BJ (cell line): ENCODE measurements at regions of chr5 and their contacts with region 1.

Region 1: DNA sequence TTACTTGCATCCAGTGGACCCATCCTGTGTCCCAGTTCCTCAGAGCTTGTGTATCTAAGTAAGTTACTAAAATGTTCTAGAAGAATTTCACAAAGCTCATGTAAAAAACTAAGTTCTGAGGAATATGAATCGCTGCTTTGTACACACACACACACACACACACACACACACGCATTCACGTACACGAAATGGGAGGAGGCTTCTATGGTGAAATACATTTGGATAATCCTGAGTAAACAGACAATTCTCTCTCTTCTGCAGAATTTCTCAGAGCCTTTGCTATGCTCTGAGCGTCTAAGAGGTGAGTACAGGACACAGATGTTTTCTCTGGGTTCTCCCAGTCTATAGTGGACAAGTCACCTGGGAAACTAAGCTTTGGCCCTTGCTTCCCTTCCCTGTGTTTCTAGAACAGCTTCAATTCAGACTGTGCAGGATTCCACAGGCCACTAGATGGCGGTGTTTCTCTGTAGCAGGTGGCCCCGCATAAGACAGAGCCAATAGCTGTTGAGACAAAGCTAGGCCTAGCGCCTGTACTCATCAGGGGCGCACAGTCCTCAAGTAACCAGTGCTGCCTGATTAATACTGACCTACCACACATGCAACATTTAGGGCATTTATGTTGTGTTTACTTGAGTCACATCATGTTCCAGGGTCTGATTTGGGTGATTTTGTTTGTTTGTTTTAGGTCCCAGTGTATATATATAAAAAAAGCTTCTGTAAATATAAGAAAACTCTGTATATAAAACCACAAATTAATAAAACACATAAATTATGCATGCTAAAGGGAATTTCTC is 114.8 kb downstream of the LIFR start:
- DNase-seq: no peak
- H3K4me3 ChIP-seq: no peak overlapping the region
- H3K27me3 ChIP-seq: no peaks in the 10 kb centered on the region; the same call in none of the 2 replicates
- CTCF ChIP-seq: peak; percentile 96

Region 2: GRCh38 chr5:38347040-38347763 is 94.4 kb before region 1 on chr5:
- CTCF ChIA-PET with region 1: no interaction called
- POLR2A ChIA-PET with region 1: no interaction called
- DNase-seq: no peak
- H3K4me3 ChIP-seq: no peak overlapping the region
- H3K27me3 ChIP-seq: no peaks in the 10 kb centered on the region
- CTCF ChIP-seq: no peak

Region 3: DNA sequence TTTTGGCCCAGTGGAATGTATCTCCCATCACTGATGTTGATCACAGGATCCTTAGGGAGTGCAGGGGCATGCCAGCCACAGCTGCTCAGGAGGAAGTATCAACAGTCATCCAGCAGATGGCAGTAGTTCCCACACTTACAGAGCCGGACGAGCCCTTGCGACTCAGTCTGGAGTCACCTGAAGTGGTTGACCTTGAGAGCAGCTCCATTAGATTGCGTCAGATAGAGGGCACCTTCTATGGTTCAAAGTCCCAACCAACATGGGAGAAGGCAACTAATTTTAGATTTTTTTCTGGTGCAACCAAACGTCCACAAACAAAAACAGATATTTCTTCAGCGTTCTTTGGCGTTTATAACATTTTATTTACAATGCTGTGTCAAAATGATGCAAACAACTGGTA is 58.8 kb before region 1 on chr5:
- CTCF ChIA-PET with region 1: interaction called, 11 read pairs
- POLR2A ChIA-PET with region 1: no interaction called
- DNase-seq: no peak
- H3K4me3 ChIP-seq: no peak overlapping the region
- H3K27me3 ChIP-seq: peaks cover 11% of the 10 kb centered on the region
- CTCF ChIP-seq: peak; percentile 89

Region 4: DNA sequence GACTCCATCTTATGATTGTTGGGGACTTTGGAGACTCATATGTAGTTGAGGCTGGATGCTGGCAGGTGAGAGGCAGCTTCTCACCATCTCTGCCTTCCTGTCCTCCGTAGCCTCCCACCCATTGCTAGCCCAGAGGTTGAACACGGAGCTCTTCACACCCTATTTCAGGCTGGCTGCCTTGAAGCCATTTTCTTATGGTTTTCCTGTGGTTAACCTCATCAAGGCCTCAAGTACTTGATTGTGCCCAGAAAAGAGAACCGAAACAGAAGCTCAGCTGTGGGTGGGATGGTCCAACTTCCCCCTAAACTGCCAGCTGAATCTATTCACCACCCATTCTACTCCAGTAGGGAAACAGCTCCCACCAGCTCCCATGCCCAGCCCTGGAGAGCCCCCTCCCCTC is 11.9 kb after region 1 on chr5:
- CTCF ChIA-PET with region 1: interaction called, 23 read pairs
- POLR2A ChIA-PET with region 1: no interaction called
- DNase-seq: no peak
- H3K4me3 ChIP-seq: no peak overlapping the region
- H3K27me3 ChIP-seq: no peaks in the 10 kb centered on the region; the same call in 1 of the 2 replicates
- CTCF ChIP-seq: no peak

Region 5: GRCh38 chr5:38515646-38516045 is 74.0 kb after region 1 on chr5:
- CTCF ChIA-PET with region 1: interaction called, 11 read pairs
- POLR2A ChIA-PET with region 1: no interaction called
- DNase-seq: no peak
- H3K4me3 ChIP-seq: no peak overlapping the region
- H3K27me3 ChIP-seq: no peaks in the 10 kb centered on the region
- CTCF ChIP-seq: peak; percentile 65

Region 6: DNA sequence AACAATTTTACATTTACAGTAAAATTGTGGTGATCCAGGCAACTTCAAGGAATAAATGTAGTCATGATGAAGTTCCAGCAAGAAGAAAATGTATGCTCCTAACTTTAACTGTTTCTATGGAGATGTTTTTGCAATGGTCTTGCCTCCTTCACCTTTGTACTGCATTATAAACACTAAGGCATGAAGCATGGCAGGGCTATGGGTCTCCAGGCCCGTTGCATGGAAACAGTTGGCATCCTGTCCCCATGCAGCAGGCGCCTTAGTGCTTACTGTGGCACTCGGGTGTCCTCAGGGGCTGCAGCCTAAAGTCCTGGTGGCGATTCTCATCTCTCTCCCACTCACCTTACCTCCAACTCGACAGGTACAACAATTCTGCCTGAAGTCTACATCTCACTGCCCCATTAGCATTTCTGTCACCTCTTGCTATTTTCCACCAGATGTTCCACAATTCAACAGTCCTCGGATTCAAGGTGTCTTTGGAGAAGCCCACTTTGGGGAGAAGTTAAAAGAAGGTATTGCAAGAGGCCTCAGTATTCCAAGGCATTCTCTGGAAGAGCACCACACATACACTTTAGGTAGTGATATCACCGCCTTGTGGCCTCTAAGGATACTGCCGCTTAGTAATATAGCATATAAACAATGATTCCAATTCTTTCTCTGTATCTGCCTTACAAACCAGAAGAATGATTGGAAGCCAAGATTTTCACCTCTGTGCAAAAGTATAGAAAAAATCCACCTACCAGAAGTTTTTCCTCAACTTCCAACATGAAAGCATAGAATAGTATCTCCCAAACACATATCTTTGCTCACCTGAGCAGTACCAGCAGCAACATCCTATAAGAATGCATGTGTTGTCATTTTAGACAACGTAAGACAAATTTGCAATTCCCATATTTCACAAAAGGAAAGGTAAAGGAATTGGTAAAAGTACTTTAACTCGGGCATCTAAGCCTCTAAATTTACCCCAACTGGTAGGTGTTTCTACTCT is 109.7 kb after region 1 on chr5:
- CTCF ChIA-PET with region 1: interaction called, 36 read pairs
- POLR2A ChIA-PET with region 1: no interaction called
- DNase-seq: no peak
- H3K4me3 ChIP-seq: no peak overlapping the region
- H3K27me3 ChIP-seq: no peaks in the 10 kb centered on the region
- CTCF ChIP-seq: peak; percentile 67

Region 7: GRCh38 chr5:38780950-38781349 is 339.3 kb after region 1 on chr5:
- CTCF ChIA-PET with region 1: interaction called, 20 read pairs
- POLR2A ChIA-PET with region 1: no interaction called
- DNase-seq: no peak
- H3K4me3 ChIP-seq: no peak overlapping the region
- H3K27me3 ChIP-seq: no peaks in the 10 kb centered on the region; the same call in 1 of the 2 replicates
- CTCF ChIP-seq: peak; percentile 39

Region 8: GRCh38 chr5:38816083-38817030 is 374.7 kb after region 1 on chr5:
- CTCF ChIA-PET with region 1: interaction called, 182 read pairs
- POLR2A ChIA-PET with region 1: no interaction called
- DNase-seq: no peak
- H3K4me3 ChIP-seq: no peak overlapping the region
- H3K27me3 ChIP-seq: no peaks in the 10 kb centered on the region
- CTCF ChIP-seq: no peak